Cardiac septum (tissue), 1 donor: ENCODE measurements at regions of chr19 and their contacts with region 1.

Region 1: GRCh38 chr19:49676690-49677231 is 310 bp upstream of the PRMT1 start:
- DNase-seq: peak; percentile 100

Region 2: GRCh38 chr19:49497047-49497788 is 179.5 kb before region 1 on chr19:
- intact Hi-C with region 1: loop called (anchors 5 kb)
- DNase-seq: peak; percentile 84

Region 3: GRCh38 chr19:49590071-49590970 is 86.4 kb before region 1 on chr19:
- intact Hi-C with region 1: loop called (anchors 5 kb)
- DNase-seq: peak; percentile 96